H1 (cell line): ENCODE measurements at regions of chr9 and their contacts with region 1.

Region 1: DNA sequence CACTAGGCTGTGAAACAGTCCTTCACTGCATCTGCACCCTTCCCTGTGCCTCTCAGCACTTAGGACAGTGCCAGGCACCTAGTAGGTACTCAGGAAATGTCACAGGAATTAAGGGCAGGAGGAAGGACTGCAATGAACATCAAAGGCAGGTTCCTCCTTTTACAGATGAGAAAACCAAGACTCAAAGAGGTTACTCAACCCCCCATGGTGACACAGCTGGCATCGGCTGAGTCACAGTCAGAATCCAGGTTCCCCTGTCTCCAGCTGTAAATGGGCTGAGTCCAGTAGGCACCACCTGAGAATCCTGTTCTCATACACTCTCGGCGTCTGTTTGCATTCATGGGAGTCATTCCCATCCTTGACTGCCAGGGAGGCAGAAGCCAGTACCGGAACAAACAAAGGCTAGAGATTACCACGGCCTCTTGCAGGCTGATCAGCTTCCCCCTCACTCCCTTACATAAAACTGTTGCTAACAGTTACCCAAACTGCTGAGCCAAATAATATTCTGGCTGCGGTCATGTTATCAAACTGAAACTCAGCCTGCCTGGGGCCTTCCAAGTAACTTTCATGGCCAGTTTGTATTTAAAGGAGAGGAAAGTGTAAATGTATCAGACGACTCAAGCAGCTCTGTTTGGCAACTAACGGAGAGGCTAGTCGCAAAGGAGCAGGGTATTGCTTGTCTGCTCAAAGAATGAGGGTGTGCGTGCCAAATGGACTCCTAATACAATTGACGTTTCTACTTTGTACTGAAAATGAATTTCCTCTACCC is 201.7 kb downstream of the PAPPA start:
- DNase-seq: no peak
- H3K4me3 ChIP-seq: no peak overlapping the region
- H3K27ac ChIP-seq: no peak overlapping the region
- H3K4me1 ChIP-seq: peaks cover 0 to 2% (median under 1%) of the 10 kb centered on the region in 4 experiments; a peak in 1 of 7 replicates
- H3K27me3 ChIP-seq: no peaks in the 10 kb centered on the region; a peak in 1 of 7 replicates
- CTCF ChIP-seq: no peak
- EP300 ChIP-seq: no peak
- POLR2A ChIP-seq: no peak
- RAD21 ChIP-seq: no peak; a peak in 1 of 4 replicates

Region 2: DNA sequence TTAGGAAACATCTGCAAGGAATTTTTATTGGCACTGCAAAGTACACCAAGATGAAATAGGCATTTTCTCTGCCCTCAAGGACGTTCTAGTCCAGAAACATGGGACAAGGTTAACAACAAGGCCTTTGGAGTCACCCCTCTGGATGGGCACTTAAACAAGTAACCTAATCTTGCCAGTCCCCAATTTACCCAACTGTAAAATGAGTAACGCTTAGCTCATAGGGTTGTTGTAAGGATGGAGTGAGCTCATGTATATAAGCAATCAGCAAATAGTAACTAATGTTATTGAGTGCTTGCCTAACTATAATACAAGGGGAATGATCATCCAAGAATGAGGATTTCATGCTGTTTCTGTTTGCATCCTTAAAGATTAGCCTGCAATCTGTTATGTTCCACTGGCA is 12.4 kb before region 1 on chr9:
- CTCF ChIA-PET with region 1: interaction called, 17 read pairs
- POLR2A ChIA-PET with region 1: interaction called, 6 read pairs
- DNase-seq: no peak
- H3K4me3 ChIP-seq: no peak overlapping the region
- H3K27ac ChIP-seq: no peak overlapping the region
- H3K4me1 ChIP-seq: peaks cover 2 to 11% (median 7%) of the 10 kb centered on the region in 4 experiments; a peak in 5 of 7 replicates
- H3K27me3 ChIP-seq: peaks cover 13 to 45% (median 35%) of the 10 kb centered on the region in 4 experiments
- CTCF ChIP-seq: no peak
- EP300 ChIP-seq: no peak
- POLR2A ChIP-seq: no peak
- RAD21 ChIP-seq: no peak

Region 3: DNA sequence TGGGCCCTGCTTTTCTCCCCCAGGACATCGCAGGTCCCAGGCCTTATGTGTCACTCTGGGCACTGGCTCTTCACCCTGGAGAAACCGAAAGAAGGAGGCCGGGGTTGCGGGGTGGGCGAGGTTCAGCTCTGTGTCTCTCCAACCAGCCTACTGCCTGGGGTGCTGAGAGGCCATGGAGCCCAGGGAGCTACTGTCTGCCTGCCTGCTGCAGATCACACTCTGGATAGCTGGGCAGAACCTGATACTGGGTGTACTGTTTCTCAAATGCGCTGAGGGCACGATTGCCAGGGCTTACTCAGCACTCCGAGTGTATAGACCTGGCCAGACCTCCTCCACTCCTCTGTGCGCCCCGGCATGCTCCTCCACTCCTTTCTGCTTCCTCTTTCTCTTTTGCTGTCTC is 13.3 kb after region 1 on chr9:
- CTCF ChIA-PET with region 1: interaction called, 22 read pairs
- POLR2A ChIA-PET with region 1: interaction called, 3 read pairs
- DNase-seq: no peak
- H3K4me3 ChIP-seq: no peak overlapping the region
- H3K27ac ChIP-seq: no peak overlapping the region
- H3K4me1 ChIP-seq: peaks cover 0 to 3% (median 1%) of the 10 kb centered on the region in 4 experiments; a peak in 3 of 7 replicates
- H3K27me3 ChIP-seq: no peaks in the 10 kb centered on the region
- CTCF ChIP-seq: no peak
- EP300 ChIP-seq: no peak
- POLR2A ChIP-seq: no peak
- RAD21 ChIP-seq: no peak